Transverse colon (tissue), 4 donors: ENCODE measurements at regions of chr7 and their contacts with region 1.

Region 1: DNA sequence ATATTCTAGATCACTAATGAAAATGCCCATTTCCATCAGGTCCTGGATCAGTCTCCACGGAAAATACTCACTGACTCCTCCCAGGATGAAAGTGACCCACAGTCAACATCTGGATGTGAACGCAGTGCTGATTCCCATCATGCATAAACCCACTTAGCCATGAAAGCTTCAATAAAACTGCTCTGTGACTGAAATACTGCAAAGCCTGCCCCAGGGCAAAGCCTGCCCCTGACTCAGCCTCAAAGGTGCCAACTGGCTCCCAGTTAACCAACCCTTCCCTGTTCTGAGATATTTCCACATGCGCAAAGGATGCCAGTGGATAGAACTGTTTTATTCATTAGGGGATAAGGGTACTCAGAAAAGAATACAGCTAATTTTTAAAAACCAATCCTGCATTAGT is 24.0 kb downstream of the OSBPL3 start:
- DNase-seq: no peak
- H3K4me3 ChIP-seq: no peak overlapping the region
- H3K27ac ChIP-seq: no peak overlapping the region
- H3K4me1 ChIP-seq: no peaks in the 10 kb centered on the region
- H3K27me3 ChIP-seq: no peaks in the 10 kb centered on the region
- CTCF ChIP-seq: no peak
- EP300 ChIP-seq: no peak
- POLR2A ChIP-seq: no peak

Region 2: DNA sequence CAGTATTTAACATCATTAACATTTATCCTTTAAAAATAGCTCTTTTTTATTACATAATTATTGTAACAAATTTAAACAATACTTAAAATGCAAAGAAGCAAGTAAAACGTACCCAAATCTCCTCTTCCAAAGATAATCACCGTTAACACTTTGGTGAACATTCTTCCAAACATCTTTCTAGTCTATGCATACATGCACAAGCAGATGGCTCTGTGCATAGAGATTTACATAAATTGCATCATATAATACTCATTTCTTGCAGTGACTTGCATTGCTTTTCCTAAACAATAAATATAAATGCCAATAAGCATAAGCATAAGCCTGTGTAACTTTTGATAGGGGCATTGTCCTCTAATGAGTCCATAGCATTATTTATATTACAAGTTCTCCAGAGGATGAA is 472.2 kb before region 1 on chr7:
- in situ Hi-C with region 1: no loop called
- intact Hi-C with region 1: loop called (anchors 5 kb)
- DNase-seq: no peak
- H3K4me3 ChIP-seq: no peak overlapping the region
- H3K27ac ChIP-seq: no peak overlapping the region
- H3K4me1 ChIP-seq: no peaks in the 10 kb centered on the region
- H3K27me3 ChIP-seq: no peaks in the 10 kb centered on the region
- CTCF ChIP-seq: no peak
- EP300 ChIP-seq: no peak
- POLR2A ChIP-seq: no peak